ENCODE measurements at regions of chr10 and their contacts with region 1.

Region 1: GRCh38 chr10:22097696-22098095 is 94.2 kb upstream of the DNAJC1 start:
- DNase-seq: no peak
- ATAC-seq: no peak
- H3K4me3 ChIP-seq: no peak overlapping the region
- H3K27ac ChIP-seq: no peak overlapping the region
- H3K4me1 ChIP-seq: no peaks in the 10 kb centered on the region
- H3K27me3 ChIP-seq: no peaks in the 10 kb centered on the region

Region 2: DNA sequence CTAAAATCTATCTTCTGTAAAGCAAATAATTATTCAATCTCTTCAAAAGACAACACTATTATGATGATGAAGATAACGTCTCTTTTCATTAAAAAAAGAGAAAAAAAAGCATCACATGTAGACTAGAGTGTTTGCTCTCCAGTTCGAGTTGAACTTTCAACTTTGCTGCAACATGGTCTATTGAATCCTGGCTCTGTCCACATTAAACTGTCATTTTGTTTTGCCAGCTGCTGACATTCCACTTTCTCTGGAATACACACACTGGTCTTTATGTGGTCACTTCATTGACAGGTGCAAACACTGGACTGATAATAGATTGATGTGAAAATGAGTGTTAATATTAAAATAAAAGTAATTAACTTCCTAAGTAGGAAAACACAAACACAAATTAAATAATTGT is 1156.1 kb after region 1 on chr10:
- intact Hi-C with region 1: loop called in 1 of 2 experiments (anchors 10 kb)
- DNase-seq: no peak
- ATAC-seq: no peak
- H3K4me3 ChIP-seq: no peak overlapping the region
- H3K27ac ChIP-seq: no peak overlapping the region
- H3K4me1 ChIP-seq: no peaks in the 10 kb centered on the region
- H3K27me3 ChIP-seq: no peaks in the 10 kb centered on the region

Measured in aorta (tissue), 5 donors.